ENCODE measurements at regions of chr10 and their contacts with region 1.

Region 1: GRCh38 chr10:33330543-33331378 is 3.7 kb downstream of the NRP1 start:
- DNase-seq: peak; percentile 90 to 91
- H3K4me3 ChIP-seq: no peak overlapping the region; the same call in 1 of the 2 replicates
- H3K4me3 Mint-ChIP-seq: peak overlapping the region; percentile 84
- H3K27ac Mint-ChIP-seq: no peak overlapping the region
- H3K4me1 ChIP-seq: peaks cover 22% of the 10 kb centered on the region
- H3K4me1 Mint-ChIP-seq: peaks cover 30% of the 10 kb centered on the region
- H3K27me3 ChIP-seq: no peaks in the 10 kb centered on the region
- H3K27me3 Mint-ChIP-seq: no peaks in the 10 kb centered on the region
- CTCF ChIP-seq: peak; percentile 93 to 98

Region 2: DNA sequence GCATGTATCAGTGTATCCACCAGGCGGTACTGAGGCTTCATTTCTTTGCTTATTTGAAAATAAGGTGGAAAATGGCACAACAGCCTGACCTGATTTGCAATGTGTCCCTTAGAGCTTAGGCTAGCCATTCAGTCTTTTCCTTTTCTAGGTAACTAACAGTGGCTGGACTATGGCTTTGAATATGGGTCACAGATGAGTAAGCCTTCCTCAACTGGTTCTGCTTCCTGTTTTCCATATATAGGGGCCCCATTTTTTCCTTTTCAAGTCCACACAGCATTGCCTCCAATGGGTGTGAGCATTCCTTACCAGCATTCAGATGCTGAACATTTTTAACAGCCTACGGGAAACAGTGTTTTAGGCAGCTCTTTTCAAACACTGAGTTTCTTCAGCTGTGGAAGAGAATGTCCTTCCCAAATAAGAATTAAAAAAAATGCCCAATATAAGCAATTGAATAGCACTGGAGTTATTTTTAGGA is 368.8 kb before region 1 on chr10:
- CTCF ChIA-PET with region 1: no interaction called
- POLR2A ChIA-PET with region 1: no interaction called
- intact Hi-C with region 1: no loop called
- DNase-seq: no peak
- H3K4me3 ChIP-seq: no peak overlapping the region
- H3K4me3 Mint-ChIP-seq: no peak overlapping the region
- H3K27ac Mint-ChIP-seq: no peak overlapping the region
- H3K4me1 ChIP-seq: peaks cover 23% of the 10 kb centered on the region
- H3K4me1 Mint-ChIP-seq: peaks cover 20% of the 10 kb centered on the region
- H3K27me3 ChIP-seq: no peaks in the 10 kb centered on the region
- H3K27me3 Mint-ChIP-seq: no peaks in the 10 kb centered on the region
- CTCF ChIP-seq: no peak

Region 3: DNA sequence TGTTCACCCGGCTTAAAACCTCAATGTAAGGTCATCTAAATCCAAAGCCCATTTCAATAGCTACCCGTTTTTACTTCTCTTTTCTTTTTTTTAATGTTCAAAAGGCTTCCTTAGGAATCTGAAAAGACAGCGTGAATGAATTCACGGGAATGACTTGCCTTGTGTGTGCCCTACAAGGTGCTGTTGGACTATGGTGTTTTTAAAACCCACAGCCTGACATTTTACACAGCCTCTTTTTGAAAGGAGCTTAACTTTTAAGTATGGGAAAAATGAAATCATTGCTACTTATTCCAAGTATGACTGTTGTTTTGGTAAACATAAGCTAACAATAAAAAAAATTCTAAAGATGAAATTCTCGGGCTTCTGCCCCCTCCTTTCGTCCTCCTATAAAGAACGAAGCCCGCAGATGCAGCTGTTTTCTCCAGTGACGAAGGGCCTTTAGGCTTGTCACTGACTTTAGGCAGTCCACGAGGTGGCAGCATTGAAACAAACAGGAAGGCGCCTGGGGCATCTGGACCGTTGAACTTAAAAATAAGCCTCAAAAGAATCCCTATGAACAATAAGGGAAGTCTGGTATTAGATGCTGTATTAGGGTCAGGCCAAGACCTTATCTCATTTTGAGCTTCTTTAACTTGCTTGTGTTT is 137.6 kb before region 1 on chr10:
- CTCF ChIA-PET with region 1: interaction called, 12 read pairs
- POLR2A ChIA-PET with region 1: no interaction called
- intact Hi-C with region 1: loop called (anchors 1 kb)
- DNase-seq: peak; percentile 85
- H3K4me3 ChIP-seq: no peak overlapping the region
- H3K4me3 Mint-ChIP-seq: no peak overlapping the region
- H3K27ac Mint-ChIP-seq: no peak overlapping the region
- H3K4me1 ChIP-seq: peaks cover 44% of the 10 kb centered on the region
- H3K4me1 Mint-ChIP-seq: peaks cover 39% of the 10 kb centered on the region
- H3K27me3 ChIP-seq: no peaks in the 10 kb centered on the region
- H3K27me3 Mint-ChIP-seq: no peaks in the 10 kb centered on the region
- CTCF ChIP-seq: peak; percentile 89 to 97

Region 4: DNA sequence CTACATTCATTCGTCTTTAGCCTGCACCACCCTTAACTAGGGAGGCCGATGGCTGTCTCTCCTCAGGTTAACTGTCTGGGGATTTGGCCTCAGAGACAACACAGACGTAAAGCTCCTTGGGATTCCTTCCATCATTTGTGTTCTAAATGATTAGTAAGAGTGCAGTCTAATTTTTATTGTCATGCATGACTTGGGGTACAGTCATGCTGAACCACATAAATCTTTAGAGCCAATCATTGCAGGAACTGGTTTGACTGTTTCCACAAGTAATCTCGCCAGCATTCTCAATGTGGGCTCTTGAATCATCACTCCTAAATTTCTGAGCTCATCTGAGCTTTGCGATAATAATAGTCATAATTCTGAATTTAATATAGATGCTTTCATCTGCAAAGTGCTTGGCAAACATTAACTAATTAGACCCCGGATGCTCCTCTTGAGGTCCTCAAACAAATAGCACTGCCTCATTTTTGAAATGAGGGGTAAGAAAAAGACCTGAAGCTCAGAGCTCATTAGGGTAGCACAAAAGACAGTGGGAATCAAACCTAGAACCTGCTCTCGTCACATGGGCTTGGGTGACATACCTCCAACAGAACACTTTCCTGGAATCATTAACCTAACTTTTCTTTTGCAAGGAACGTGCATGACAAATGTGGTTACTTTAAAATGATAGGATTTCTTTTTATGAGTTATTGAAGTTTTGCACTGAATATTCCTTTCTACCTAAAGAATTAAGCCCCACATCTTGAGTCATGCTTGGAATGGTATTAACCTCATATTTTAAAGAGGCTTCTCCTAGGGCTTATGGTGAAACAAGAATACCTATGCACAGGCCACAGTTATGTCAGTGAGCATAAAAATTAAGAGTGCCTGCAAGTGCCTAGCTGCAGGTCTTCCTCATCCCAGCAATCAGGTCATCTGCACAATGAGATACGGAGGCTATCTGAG is 122.6 kb after region 1 on chr10:
- CTCF ChIA-PET with region 1: no interaction called
- POLR2A ChIA-PET with region 1: no interaction called
- intact Hi-C with region 1: loop called (anchors 2 kb)
- DNase-seq: no peak
- H3K4me3 ChIP-seq: no peak overlapping the region
- H3K4me3 Mint-ChIP-seq: no peak overlapping the region
- H3K27ac Mint-ChIP-seq: no peak overlapping the region
- H3K4me1 ChIP-seq: peaks cover 21% of the 10 kb centered on the region
- H3K4me1 Mint-ChIP-seq: peaks cover 5% of the 10 kb centered on the region
- H3K27me3 ChIP-seq: no peaks in the 10 kb centered on the region
- H3K27me3 Mint-ChIP-seq: no peaks in the 10 kb centered on the region
- CTCF ChIP-seq: no peak

Region 5: DNA sequence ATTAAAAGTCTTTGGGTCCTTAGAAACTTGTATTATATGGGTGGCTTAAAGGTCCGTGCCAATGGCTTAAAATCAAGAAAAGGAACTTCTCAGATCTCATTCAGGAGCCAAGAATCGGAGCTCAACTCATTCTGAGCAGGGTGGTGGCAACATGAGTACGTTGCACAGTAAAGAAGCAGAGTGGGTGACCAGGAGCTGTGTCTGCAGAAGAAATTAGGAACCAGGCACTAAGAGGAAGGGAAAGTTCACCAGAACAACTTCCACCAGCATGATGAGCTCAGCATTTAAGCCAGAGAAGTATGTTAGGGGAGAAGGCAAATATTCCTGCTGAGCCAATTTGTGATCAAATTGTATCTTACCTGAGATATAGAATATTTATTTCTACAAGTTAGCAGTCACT is 239.7 kb after region 1 on chr10:
- CTCF ChIA-PET with region 1: no interaction called
- POLR2A ChIA-PET with region 1: no interaction called
- intact Hi-C with region 1: loop called (anchors 2 kb)
- DNase-seq: no peak
- H3K4me3 ChIP-seq: no peak overlapping the region
- H3K4me3 Mint-ChIP-seq: no peak overlapping the region
- H3K27ac Mint-ChIP-seq: no peak overlapping the region
- H3K4me1 ChIP-seq: peaks cover 8% of the 10 kb centered on the region
- H3K4me1 Mint-ChIP-seq: peaks cover 22% of the 10 kb centered on the region
- H3K27me3 ChIP-seq: no peaks in the 10 kb centered on the region
- H3K27me3 Mint-ChIP-seq: no peaks in the 10 kb centered on the region
- CTCF ChIP-seq: no peak

Region 6: GRCh38 chr10:33801748-33802147 is 471.0 kb after region 1 on chr10:
- CTCF ChIA-PET with region 1: no interaction called
- POLR2A ChIA-PET with region 1: interaction called, 16 read pairs
- intact Hi-C with region 1: loop called (anchors 2 kb)
- DNase-seq: peak; percentile 81 to 88
- H3K4me3 ChIP-seq: no peak overlapping the region
- H3K4me3 Mint-ChIP-seq: peak overlapping the region; percentile 39
- H3K27ac Mint-ChIP-seq: peak overlapping the region; percentile 90
- H3K4me1 ChIP-seq: peaks cover 69% of the 10 kb centered on the region
- H3K4me1 Mint-ChIP-seq: peaks cover 50% of the 10 kb centered on the region
- H3K27me3 ChIP-seq: no peaks in the 10 kb centered on the region
- H3K27me3 Mint-ChIP-seq: no peaks in the 10 kb centered on the region
- CTCF ChIP-seq: no peak

Region 7: DNA sequence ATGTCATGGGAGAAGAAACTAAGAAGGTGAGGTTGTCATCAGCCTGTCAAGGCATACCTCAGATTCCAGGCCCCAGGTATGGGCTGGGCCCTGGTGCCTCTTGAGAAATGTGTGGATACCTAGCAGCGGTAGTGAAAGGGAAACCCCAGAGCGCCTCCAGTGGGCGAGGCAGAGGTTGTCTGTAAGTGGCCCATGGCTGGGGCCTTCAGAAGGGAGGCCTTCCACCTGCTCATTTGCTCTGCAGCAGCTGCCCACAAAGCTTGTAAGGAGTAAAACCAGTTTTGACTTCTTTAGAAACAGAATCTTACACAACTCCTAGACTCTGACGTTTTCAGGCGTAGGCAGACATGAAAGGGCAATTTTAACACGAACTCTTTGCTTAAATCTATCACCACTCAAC is 974.4 kb after region 1 on chr10:
- CTCF ChIA-PET with region 1: no interaction called
- POLR2A ChIA-PET with region 1: no interaction called
- intact Hi-C with region 1: loop called (anchors 5 kb)
- DNase-seq: peak; percentile 90 to 92
- H3K4me3 ChIP-seq: no peak overlapping the region
- H3K4me3 Mint-ChIP-seq: no peak overlapping the region
- H3K27ac Mint-ChIP-seq: peak overlapping the region; percentile 48
- H3K4me1 ChIP-seq: no peaks in the 10 kb centered on the region; the same call in 1 of the 2 replicates
- H3K4me1 Mint-ChIP-seq: peaks cover 7% of the 10 kb centered on the region
- H3K27me3 ChIP-seq: no peaks in the 10 kb centered on the region
- H3K27me3 Mint-ChIP-seq: no peaks in the 10 kb centered on the region
- CTCF ChIP-seq: peak; percentile 58 to 84

Region 8: DNA sequence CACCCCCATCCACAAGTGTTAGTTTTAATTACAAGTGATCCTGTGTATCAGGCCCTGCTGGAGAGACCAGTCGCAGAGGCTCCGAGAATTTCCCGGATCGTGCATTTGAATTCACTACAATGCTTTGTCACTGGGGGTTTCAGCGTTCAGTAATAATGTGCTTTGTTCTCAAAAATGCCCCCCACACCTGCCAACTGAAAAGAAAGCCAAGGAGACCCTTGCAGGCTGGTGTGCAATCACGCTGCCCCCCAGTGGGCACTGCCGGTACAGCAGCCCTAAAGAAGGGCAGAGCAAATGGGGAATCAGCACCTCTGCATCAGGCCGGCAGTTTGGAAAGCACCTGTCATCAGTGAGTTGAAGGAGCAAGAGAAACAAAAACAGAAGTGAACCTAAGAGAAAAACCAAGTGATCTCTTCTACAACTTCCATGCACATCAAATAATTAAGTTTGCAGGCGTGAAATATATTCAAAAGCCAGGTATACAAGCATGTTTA is 1306.7 kb after region 1 on chr10:
- CTCF ChIA-PET with region 1: no interaction called
- POLR2A ChIA-PET with region 1: no interaction called
- intact Hi-C with region 1: loop called (anchors 1 kb)
- DNase-seq: peak; percentile 63 to 88
- H3K4me3 ChIP-seq: no peak overlapping the region
- H3K4me3 Mint-ChIP-seq: no peak overlapping the region
- H3K27ac Mint-ChIP-seq: no peak overlapping the region
- H3K4me1 ChIP-seq: no peaks in the 10 kb centered on the region
- H3K4me1 Mint-ChIP-seq: peaks cover 13% of the 10 kb centered on the region
- H3K27me3 ChIP-seq: no peaks in the 10 kb centered on the region
- H3K27me3 Mint-ChIP-seq: no peaks in the 10 kb centered on the region
- CTCF ChIP-seq: peak; percentile 98 to 99

Measured in Caco-2 (cell line).